SK-N-SH (cell line): ENCODE measurements at regions of chr14 and their contacts with region 1.

Region 1: GRCh38 chr14:92670160-92670559 is 78.3 kb downstream of the LGMN start:
- DNase-seq: peak; percentile 52
- H3K4me3 ChIP-seq: no peak overlapping the region
- H3K27ac ChIP-seq: no peak overlapping the region
- H3K4me1 ChIP-seq: no peaks in the 10 kb centered on the region; a peak in 1 of 4 replicates
- H3K27me3 ChIP-seq: no peaks in the 10 kb centered on the region
- CTCF ChIP-seq: peak; percentile 16; the same call in 1 of the 2 replicates
- EP300 ChIP-seq: no peak; a peak in 1 of 4 replicates
- RAD21 ChIP-seq: peak; percentile 4; the same call in 1 of the 2 replicates

Region 2: GRCh38 chr14:92603309-92604242 is 66.6 kb before region 1 on chr14:
- CTCF ChIA-PET with region 1: no interaction called
- POLR2A ChIA-PET with region 1: no interaction called
- DNase-seq: no peak
- H3K4me3 ChIP-seq: no peak overlapping the region
- H3K27ac ChIP-seq: peak overlapping the region in 1 of 2 experiments; percentile 58; a peak in 2 of 4 replicates
- H3K4me1 ChIP-seq: peaks cover 0 to 18% of the 10 kb centered on the region in 2 experiments; a peak in 3 of 4 replicates
- H3K27me3 ChIP-seq: no peaks in the 10 kb centered on the region
- CTCF ChIP-seq: peak; percentile 48
- EP300 ChIP-seq: no peak
- RAD21 ChIP-seq: peak; percentile 41; the same call in 1 of the 2 replicates

Region 3: DNA sequence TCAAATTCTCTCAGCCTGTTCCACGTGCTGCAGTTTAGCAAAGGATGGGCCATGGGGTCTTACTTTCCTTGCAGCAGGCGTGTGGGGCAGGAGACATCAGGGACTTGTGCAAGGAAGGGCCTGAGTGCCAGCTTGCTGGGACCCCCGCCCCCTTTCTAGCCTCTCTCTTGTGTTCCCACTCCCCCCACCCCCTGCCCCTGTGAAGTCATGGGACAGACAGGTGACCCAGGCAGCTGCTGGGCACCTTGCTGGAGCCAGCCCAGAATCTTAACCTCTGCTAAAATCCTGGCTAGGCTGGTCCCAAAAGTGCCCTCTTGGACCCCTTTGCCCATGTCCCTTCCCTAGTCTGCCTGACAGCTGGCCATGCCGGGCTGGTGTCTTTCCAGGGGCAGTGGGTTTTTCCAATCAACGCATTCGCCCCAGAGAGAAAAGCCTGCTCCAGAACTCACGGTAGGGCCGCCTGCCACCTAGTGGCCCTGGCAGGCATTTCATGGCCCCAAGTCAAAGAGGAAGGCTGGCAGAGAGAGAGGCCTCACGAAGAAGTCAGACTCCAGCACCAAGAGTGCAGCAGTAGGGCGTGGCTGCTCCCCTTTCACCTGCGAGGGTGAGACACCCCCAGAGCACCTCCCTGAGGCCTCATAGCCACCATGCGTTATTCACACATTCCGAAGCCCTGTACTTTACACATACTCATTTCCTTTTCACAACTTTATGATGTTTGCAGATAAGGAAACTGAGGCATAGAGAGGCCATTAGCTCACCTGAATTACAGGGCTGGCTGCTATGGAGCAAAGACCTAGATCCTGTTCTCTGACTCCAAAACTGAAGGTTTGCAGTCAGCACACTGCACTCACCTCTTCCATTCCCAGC is 10.9 kb after region 1 on chr14:
- CTCF ChIA-PET with region 1: interaction called, 30 read pairs
- POLR2A ChIA-PET with region 1: no interaction called
- DNase-seq: peak; percentile 79
- H3K4me3 ChIP-seq: no peak overlapping the region
- H3K27ac ChIP-seq: no peak overlapping the region
- H3K4me1 ChIP-seq: no peaks in the 10 kb centered on the region
- H3K27me3 ChIP-seq: no peaks in the 10 kb centered on the region
- CTCF ChIP-seq: peak; percentile 90
- EP300 ChIP-seq: no peak
- RAD21 ChIP-seq: peak; percentile 83